CD4-positive, alpha-beta memory T cell (primary cell): ENCODE measurements at regions of chrX and their contacts with region 1.

Region 1: GRCh38 chrX:1416965-1417760 is 25.2 kb upstream of the SLC25A6 start:
- DNase-seq: no peak
- H3K4me3 ChIP-seq: no peak overlapping the region
- H3K4me3 Mint-ChIP-seq: no peak overlapping the region
- H3K27ac ChIP-seq: no peak overlapping the region
- H3K27ac Mint-ChIP-seq: no peak overlapping the region
- H3K4me1 ChIP-seq: no peaks in the 10 kb centered on the region
- H3K4me1 Mint-ChIP-seq: peaks cover 0 to 5% (median 0%) of the 10 kb centered on the region in 4 donors
- H3K27me3 ChIP-seq: no peaks in the 10 kb centered on the region
- H3K27me3 Mint-ChIP-seq: no peaks in the 10 kb centered on the region

Region 2: DNA sequence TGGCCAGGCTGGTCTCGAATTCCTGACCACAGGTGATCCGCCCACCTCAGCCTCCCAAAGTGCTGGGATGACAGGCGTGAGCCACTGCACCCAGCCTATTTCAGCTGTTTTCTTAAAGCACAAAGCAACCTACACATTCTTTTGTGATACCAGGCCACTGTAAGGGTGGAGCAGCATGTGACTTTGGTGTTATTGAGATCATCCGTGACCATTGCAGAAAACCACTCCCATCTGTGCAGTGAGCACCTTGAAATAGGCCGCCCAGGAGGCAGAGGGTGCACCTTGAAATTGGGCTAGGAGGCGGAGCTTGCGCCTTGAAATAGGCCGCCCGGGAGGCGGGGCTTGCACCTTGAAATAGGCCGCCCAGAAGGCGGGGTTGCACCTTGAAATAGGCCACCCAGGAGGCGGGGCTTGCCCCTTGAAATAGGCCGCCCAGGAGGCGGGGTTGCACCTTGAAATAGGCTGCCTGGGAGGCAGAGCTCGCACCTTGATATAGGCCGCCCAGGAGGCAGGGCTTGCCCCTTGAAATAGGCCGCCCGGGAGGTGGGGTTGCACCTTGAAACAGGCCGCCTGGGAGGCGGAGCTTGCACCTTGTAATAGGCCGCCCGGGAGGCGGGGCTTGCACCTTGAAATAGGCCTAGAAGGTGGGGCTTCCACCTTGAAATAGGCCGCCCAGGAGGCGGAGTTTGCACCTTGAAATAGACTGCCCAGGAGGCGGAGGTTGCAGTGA is 16.3 kb before region 1 on chrX:
- CTCF ChIA-PET with region 1: no interaction called
- POLR2A ChIA-PET with region 1: no interaction called
- intact Hi-C with region 1: loop called (anchors 1 kb)
- DNase-seq: no peak
- H3K4me3 ChIP-seq: no peak overlapping the region
- H3K4me3 Mint-ChIP-seq: no peak overlapping the region
- H3K27ac ChIP-seq: no peak overlapping the region
- H3K27ac Mint-ChIP-seq: peak overlapping the region in 1 of 7 donors; percentile 35
- H3K4me1 ChIP-seq: no peaks in the 10 kb centered on the region
- H3K4me1 Mint-ChIP-seq: peaks cover 3 to 4% (median 4%) of the 10 kb centered on the region in 4 donors
- H3K27me3 ChIP-seq: no peaks in the 10 kb centered on the region
- H3K27me3 Mint-ChIP-seq: no peaks in the 10 kb centered on the region